OCI-LY7 (cell line): ENCODE measurements at regions of chr11 and their contacts with region 1.

Region 1: GRCh38 chr11:72483412-72484186 is 49.3 kb upstream of the CLPB start:
- DNase-seq: no peak
- H3K4me3 ChIP-seq: no peak overlapping the region
- H3K27ac ChIP-seq: no peak overlapping the region
- H3K4me1 ChIP-seq: no peaks in the 10 kb centered on the region
- CTCF ChIP-seq: no peak

Region 2: GRCh38 chr11:72326151-72326848 is 157.3 kb before region 1 on chr11:
- CTCF ChIA-PET with region 1: no interaction called
- POLR2A ChIA-PET with region 1: no interaction called
- intact Hi-C with region 1: no loop called
- DNase-seq: no peak
- H3K4me3 ChIP-seq: no peak overlapping the region
- H3K27ac ChIP-seq: no peak overlapping the region
- H3K4me1 ChIP-seq: no peaks in the 10 kb centered on the region
- CTCF ChIP-seq: no peak

Region 3: GRCh38 chr11:72573072-72573854 is 89.7 kb after region 1 on chr11:
- CTCF ChIA-PET with region 1: no interaction called
- POLR2A ChIA-PET with region 1: no interaction called
- intact Hi-C with region 1: loop called (anchors 2 kb)
- DNase-seq: no peak
- H3K4me3 ChIP-seq: no peak overlapping the region
- H3K27ac ChIP-seq: no peak overlapping the region
- H3K4me1 ChIP-seq: no peaks in the 10 kb centered on the region
- CTCF ChIP-seq: peak; percentile 39; the same call in 1 of the 2 replicates

Region 4: GRCh38 chr11:72683782-72684200 is 200.2 kb after region 1 on chr11:
- CTCF ChIA-PET with region 1: no interaction called
- POLR2A ChIA-PET with region 1: no interaction called
- intact Hi-C with region 1: loop called (anchors 5 kb)
- DNase-seq: peak; percentile 68
- H3K4me3 ChIP-seq: no peak overlapping the region
- H3K27ac ChIP-seq: no peak overlapping the region
- H3K4me1 ChIP-seq: no peaks in the 10 kb centered on the region
- CTCF ChIP-seq: peak; percentile 88